ENCODE measurements at regions of chr12 and their contacts with region 1.

Region 1: DNA sequence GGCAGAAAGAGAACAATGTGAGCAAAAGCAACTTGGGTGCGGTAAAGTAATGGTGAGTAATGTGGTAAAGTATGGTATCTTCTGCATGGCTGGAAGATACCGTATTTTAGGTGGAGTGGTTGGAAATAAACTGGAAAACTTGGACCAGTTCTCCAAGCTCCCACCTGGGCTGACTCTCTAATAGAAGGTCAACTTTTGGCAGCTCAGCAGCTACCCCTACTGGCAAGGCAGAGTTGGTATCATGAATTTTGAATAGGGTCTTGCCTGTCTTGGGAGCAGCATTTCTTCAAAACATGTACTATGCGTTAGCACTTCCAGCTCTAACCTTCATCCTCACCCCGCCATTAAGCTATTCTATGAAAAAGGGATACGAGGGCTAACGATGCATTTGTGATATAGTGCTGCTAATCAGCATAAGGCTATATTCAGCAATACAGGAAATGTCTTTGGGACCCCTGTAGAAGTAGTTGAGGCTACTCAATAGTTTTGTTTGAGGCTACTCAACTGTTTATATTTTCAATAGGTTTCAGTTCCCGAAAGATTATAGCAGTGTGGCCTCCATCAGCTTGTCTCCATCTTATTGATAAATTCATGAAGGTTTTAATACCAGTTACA is 276.3 kb upstream of the FAR2 start:
- DNase-seq: peak in 4 of 10 donors; percentile 5 to 41 (median 30)
- H3K4me3 ChIP-seq: no peak overlapping the region
- H3K27ac ChIP-seq: no peak overlapping the region
- H3K27me3 ChIP-seq: peaks cover 0 to under 1% (median 0%) of the 10 kb centered on the region in 45 donors
- CTCF ChIP-seq: peak; percentile 33 to 84 (median 68)

Region 2: DNA sequence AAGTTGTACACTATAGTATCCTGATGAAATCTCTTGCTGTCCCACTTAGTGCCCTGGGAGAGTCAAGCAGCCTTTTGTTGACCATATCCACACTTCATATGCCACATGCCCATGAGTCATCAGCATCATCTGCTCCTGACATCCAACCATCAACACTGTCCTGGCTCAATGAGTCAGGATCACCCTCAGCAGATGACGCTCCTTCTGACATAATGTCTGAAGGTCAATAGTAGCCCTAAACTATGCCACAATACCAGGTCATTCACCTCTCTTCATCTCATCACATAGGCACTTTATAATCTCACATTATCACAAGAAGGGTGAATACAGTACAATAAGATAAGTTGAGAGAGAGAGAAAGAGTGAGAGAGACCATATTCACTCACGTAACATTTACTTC is 92.7 kb before region 1 on chr12:
- intact Hi-C with region 1: loop called in 1 of 2 experiments (anchors 5 kb)
- DNase-seq: peak in 3 of 10 donors; percentile 3 to 43 (median 12)
- H3K4me3 ChIP-seq: no peak overlapping the region
- H3K27ac ChIP-seq: no peak overlapping the region
- H3K27me3 ChIP-seq: no peaks in the 10 kb centered on the region
- CTCF ChIP-seq: no peak

Region 3: GRCh38 chr12:29066011-29066588 is 193.3 kb after region 1 on chr12:
- intact Hi-C with region 1: loop called in 1 of 2 experiments (anchors 5 kb)
- DNase-seq: peak; percentile 7 to 84 (median 67)
- H3K4me3 ChIP-seq: peak overlapping the region in 1 of 59 donors; percentile 9
- H3K27ac ChIP-seq: peak overlapping the region in 58 of 59 donors; percentile 54 to 95 (median 84)
- H3K27me3 ChIP-seq: no peaks in the 10 kb centered on the region
- CTCF ChIP-seq: peak in 6 of 56 donors; percentile 6 to 22 (median 18)